ENCODE measurements at regions of chr20 and their contacts with region 1.

Region 1: DNA sequence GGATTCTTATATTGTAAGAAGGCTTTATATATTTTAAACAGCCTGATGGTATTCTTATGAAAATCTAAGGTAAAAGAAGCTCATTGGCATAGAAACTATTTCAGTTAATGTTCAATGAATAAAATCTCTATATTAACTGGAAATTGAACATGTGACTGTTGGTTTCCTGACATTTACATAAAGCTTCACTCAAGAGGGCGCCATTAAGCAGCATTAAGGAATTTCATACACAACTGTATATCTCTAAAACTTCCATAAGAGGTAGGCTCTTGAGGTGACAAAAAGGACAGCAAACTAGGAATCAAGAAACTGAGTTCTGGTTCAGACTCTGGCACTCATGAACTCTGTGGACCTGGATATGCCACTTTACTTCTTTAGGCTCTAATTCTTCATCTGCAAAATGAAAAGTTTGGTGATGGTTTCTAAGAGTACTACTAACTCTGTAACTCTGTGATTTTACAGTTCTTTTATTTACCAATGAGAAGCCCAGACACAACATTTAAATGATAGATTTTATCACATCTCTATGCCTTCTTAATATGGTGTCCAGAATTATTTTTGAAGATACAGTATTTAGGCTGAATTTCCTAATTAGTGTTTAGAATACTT is 147.5 kb downstream of the FLRT3 start:
- DNase-seq: peak; percentile 61
- H3K4me3 Mint-ChIP-seq: no peak overlapping the region
- H3K27ac Mint-ChIP-seq: no peak overlapping the region
- H3K4me1 Mint-ChIP-seq: peaks cover 11% of the 10 kb centered on the region
- H3K27me3 Mint-ChIP-seq: no peaks in the 10 kb centered on the region
- CTCF ChIP-seq: peak; percentile 69

Region 2: DNA sequence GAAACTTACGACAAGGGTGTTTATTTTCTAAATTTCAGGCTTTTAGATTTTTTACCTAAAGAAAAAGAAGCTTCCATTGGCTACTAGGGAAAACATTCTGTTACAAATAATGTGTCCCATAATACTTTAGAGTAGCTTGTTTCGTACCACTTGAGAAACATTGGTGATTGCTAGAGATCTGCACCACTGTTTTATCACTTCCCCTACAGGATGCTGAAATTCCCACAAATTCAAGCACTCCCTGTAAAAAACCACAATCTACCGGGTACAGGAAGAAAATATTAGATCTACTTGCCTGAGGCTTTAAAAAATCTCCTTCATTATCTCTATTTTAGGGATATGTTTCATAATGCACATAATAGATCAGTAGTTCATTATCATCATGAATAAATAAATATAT is 229.4 kb before region 1 on chr20:
- CTCF ChIA-PET with region 1: no interaction called
- POLR2A ChIA-PET with region 1: no interaction called
- intact Hi-C with region 1: no loop called
- DNase-seq: no peak
- H3K4me3 Mint-ChIP-seq: no peak overlapping the region
- H3K27ac Mint-ChIP-seq: no peak overlapping the region
- H3K4me1 Mint-ChIP-seq: peaks cover 6% of the 10 kb centered on the region
- H3K27me3 Mint-ChIP-seq: no peaks in the 10 kb centered on the region
- CTCF ChIP-seq: no peak

Region 3: GRCh38 chr20:14264869-14265268 is 75.0 kb after region 1 on chr20:
- CTCF ChIA-PET with region 1: interaction called, 16 read pairs
- POLR2A ChIA-PET with region 1: no interaction called
- intact Hi-C with region 1: loop called (anchors 1 kb)
- DNase-seq: peak; percentile 26
- H3K4me3 Mint-ChIP-seq: no peak overlapping the region
- H3K27ac Mint-ChIP-seq: no peak overlapping the region
- H3K4me1 Mint-ChIP-seq: no peaks in the 10 kb centered on the region
- H3K27me3 Mint-ChIP-seq: no peaks in the 10 kb centered on the region
- CTCF ChIP-seq: peak; percentile 25

Region 4: GRCh38 chr20:14307956-14308355 is 118.1 kb after region 1 on chr20:
- CTCF ChIA-PET with region 1: interaction called, 11 read pairs
- POLR2A ChIA-PET with region 1: no interaction called
- intact Hi-C with region 1: no loop called
- DNase-seq: no peak
- H3K4me3 Mint-ChIP-seq: no peak overlapping the region
- H3K27ac Mint-ChIP-seq: no peak overlapping the region
- H3K4me1 Mint-ChIP-seq: no peaks in the 10 kb centered on the region
- H3K27me3 Mint-ChIP-seq: no peaks in the 10 kb centered on the region
- CTCF ChIP-seq: no peak

Region 5: DNA sequence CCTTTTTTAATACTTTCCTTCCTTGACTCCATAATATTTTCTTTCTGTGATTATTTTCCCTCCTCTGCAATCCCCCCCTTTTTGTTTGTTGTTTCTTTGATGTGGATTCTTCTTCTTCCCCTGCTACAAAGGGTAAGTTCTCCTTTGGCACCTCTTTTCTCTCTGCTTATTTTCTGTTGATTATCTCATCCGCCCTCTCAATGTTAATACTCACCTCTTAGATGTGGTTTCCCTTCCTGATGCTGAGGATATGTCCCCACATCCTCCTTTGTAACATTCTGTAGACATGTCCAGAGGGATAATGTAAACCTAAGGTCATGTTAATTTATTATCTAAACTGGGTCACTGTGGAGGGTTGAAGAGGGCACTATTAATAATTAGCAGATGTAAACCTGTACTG is 129.8 kb after region 1 on chr20:
- CTCF ChIA-PET with region 1: interaction called, 13 read pairs
- POLR2A ChIA-PET with region 1: interaction called, 8 read pairs
- intact Hi-C with region 1: no loop called
- DNase-seq: no peak
- H3K4me3 Mint-ChIP-seq: no peak overlapping the region
- H3K27ac Mint-ChIP-seq: no peak overlapping the region
- H3K4me1 Mint-ChIP-seq: no peaks in the 10 kb centered on the region
- H3K27me3 Mint-ChIP-seq: no peaks in the 10 kb centered on the region
- CTCF ChIP-seq: no peak